IMR-90 (cell line): ENCODE measurements at regions of chr7 and their contacts with region 1.

Region 1: DNA sequence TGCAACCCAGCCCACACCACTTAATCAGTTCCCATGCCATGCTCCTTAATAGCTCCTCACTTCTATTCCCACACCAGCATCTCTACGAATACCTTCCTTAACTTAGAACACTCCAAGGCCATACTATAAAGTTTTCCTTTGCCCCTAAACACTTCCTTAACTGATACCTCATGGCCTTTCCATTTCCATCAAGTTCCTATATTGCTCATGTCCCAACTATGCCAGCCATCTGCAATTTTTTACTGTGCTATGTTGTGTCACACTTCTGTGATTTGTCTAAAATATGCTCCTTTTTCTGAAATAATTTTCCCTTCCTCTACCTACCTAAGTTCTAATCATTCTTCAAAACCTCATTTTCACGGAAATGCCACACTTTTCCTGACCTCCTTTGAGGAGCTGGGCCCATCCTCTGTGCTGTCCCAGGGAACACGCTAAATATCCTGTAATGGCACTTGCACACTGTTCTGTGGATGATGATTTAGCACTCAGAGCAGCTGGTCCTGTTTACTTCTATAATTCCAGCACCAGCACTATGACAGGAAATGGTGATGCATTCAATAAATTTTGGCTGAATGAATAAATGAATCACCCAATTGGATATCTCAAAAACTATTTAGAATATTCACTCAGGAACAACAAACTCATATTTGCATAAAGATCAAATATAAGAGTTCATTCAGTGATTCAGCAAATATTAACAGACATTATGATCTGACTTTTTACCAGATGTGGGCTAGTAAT is 266.5 kb upstream of the HGF start:
- DNase-seq: peak; percentile 91
- ATAC-seq: peak; percentile 94
- H3K4me3 ChIP-seq: no peak overlapping the region
- H3K27ac ChIP-seq: peak overlapping the region; percentile 87
- H3K4me1 ChIP-seq: peaks cover 8% of the 10 kb centered on the region
- H3K27me3 ChIP-seq: no peaks in the 10 kb centered on the region
- CTCF ChIP-seq: no peak
- POLR2A ChIP-seq: no peak
- RAD21 ChIP-seq: no peak

Region 2: GRCh38 chr7:81155654-81156373 is 880.5 kb before region 1 on chr7:
- CTCF ChIA-PET with region 1: interaction called, 10 read pairs
- POLR2A ChIA-PET with region 1: no interaction called
- dilution Hi-C with region 1: no loop called
- in situ Hi-C with region 1: no loop called
- intact Hi-C with region 1: no loop called
- DNase-seq: no peak
- ATAC-seq: no peak
- H3K4me3 ChIP-seq: no peak overlapping the region
- H3K27ac ChIP-seq: no peak overlapping the region
- H3K4me1 ChIP-seq: no peaks in the 10 kb centered on the region
- H3K27me3 ChIP-seq: no peaks in the 10 kb centered on the region
- CTCF ChIP-seq: no peak
- POLR2A ChIP-seq: no peak
- RAD21 ChIP-seq: no peak

Region 3: GRCh38 chr7:81433206-81433605 is 603.1 kb before region 1 on chr7:
- CTCF ChIA-PET with region 1: no interaction called
- POLR2A ChIA-PET with region 1: no interaction called
- dilution Hi-C with region 1: no loop called
- in situ Hi-C with region 1: no loop called
- intact Hi-C with region 1: no loop called
- DNase-seq: no peak
- ATAC-seq: no peak
- H3K4me3 ChIP-seq: no peak overlapping the region
- H3K27ac ChIP-seq: no peak overlapping the region
- H3K4me1 ChIP-seq: no peaks in the 10 kb centered on the region
- H3K27me3 ChIP-seq: no peaks in the 10 kb centered on the region
- CTCF ChIP-seq: no peak
- POLR2A ChIP-seq: no peak
- RAD21 ChIP-seq: no peak

Region 4: GRCh38 chr7:81725812-81726127 is 310.5 kb before region 1 on chr7:
- CTCF ChIA-PET with region 1: no interaction called
- POLR2A ChIA-PET with region 1: interaction called, 13 read pairs
- dilution Hi-C with region 1: no loop called
- in situ Hi-C with region 1: no loop called
- intact Hi-C with region 1: no loop called
- DNase-seq: peak; percentile 99
- ATAC-seq: peak; percentile 83
- H3K4me3 ChIP-seq: no peak overlapping the region
- H3K27ac ChIP-seq: peak overlapping the region; percentile 55; the same call in 1 of the 2 replicates
- H3K4me1 ChIP-seq: peaks cover 2% of the 10 kb centered on the region; the same call in 1 of the 2 replicates
- H3K27me3 ChIP-seq: no peaks in the 10 kb centered on the region
- CTCF ChIP-seq: no peak
- POLR2A ChIP-seq: no peak
- RAD21 ChIP-seq: no peak; the same call in 1 of the 2 replicates